Activated CD8-positive, alpha-beta T cell treated with anti-CD3 and anti-CD28 coated beads for 36 hours (primary cell): ENCODE measurements at regions of chr2 and their contacts with region 1.

Region 1: DNA sequence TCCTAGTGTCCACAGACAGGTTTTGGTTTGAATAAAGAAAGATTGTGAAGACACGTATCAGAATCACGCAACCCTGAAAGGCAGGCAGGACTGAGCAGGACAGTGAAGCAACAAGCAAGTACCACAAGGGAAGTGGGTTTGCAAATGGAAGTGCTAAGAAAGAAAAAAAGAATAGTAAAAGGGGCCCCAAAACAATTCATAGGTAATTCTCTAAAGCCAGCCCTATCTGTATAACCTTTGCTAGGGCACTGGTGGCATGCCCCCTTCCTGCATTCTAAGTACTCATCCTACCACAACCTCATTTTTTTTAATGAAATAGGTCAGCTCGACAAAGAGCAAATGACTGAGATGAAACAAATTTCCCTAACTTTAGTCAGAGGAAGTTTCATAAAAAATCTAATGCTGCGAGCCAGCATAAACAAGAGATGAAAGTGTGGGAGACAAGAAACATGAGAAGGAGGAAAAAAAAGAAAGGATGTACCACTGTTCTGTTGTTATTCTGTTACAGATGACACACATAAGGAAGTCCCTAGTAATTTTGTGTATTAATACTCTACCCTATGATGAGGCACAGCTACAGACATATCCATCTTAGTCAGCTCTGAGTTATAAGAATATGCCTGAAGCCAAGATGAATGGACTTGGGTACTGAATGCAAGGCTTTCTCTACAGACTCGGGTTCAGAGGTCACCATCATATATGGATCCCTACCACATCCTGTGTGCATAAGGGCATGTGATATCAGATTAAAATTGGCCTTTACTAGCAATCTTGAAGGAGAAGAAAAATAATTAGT is 32.2 kb downstream of the IKZF2 start:
- DNase-seq: peak; percentile 73
- ATAC-seq: peak; percentile 88
- H3K4me3 Mint-ChIP-seq: peak overlapping the region; percentile 50
- H3K27ac Mint-ChIP-seq: peak overlapping the region; percentile 90
- H3K4me1 Mint-ChIP-seq: peaks cover 66% of the 10 kb centered on the region
- H3K27me3 Mint-ChIP-seq: no peaks in the 10 kb centered on the region
- CTCF ChIP-seq: no peak

Region 2: DNA sequence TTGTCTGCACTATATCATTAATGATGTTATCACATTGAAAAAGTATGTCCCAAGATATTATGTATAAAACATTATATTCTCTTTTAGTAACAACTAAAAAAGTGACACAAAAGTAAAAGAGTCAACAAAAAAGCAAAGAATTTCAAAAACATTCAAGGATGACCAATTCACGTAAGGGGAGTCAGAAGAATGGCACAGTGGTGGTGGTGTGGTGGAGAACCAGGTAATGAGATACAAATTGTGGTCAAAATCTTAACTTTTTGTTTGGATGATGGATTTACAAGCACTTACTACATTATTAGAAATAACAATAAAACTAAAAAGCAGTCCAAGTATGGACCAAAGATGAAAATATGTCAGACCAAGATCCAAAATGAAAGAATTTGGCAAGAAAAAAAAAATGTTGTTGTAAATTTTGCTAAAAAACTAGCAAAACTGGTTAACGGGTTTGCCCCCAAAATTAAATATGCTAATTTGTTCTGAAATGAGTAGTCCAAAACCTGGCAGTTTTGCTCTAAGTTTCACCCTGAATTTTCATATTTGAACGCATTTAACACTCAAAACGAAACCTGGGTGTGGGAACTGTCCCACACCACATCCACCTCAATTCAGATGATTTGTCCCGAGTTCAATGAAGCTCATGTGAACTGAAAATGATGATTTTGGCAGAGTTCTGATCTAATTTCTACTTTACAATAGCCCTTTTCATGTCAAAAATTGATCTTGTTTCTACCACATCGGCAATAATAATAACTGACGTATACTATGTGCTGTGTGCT is 103.7 kb before region 1 on chr2:
- CTCF ChIA-PET with region 1: no interaction called
- POLR2A ChIA-PET with region 1: no interaction called
- intact Hi-C with region 1: loop called (anchors 5 kb)
- DNase-seq: peak; percentile 87
- ATAC-seq: peak; percentile 83
- H3K4me3 Mint-ChIP-seq: peak overlapping the region; percentile 40
- H3K27ac Mint-ChIP-seq: peak overlapping the region; percentile 72
- H3K4me1 Mint-ChIP-seq: peaks cover 46% of the 10 kb centered on the region
- H3K27me3 Mint-ChIP-seq: peaks cover 9% of the 10 kb centered on the region
- CTCF ChIP-seq: no peak